ENCODE measurements at regions of chr2 and their contacts with region 1.

Region 1: DNA sequence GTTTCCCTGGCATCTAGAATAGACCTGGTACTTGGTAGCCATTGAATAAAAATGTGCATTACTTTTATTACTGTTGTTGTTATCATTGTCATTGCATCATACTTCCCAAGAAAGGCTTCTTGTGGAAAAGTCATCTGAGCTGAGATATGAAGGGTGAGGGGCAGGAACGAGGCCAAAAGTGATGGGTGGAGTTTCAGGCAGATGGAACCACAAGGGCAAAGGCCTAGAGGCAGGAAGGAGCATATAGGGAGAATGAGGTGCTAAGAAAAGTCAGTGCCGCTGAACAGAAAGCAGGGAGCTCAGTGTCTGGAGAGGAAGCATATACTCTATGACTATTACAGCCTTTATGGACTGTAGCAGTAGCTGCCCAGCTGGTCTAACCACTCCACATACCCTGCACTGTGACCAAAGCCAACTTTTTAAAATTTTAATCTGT is 219.3 kb downstream of the SPP2 start:
- DNase-seq: no peak
- H3K4me3 ChIP-seq: no peak overlapping the region
- H3K4me3 Mint-ChIP-seq: no peak overlapping the region
- H3K27ac ChIP-seq: no peak overlapping the region
- H3K27ac Mint-ChIP-seq: peak overlapping the region in 3 of 7 donors; percentile 0 to 69 (median 48)
- H3K4me1 ChIP-seq: peaks cover 40% of the 10 kb centered on the region
- H3K4me1 Mint-ChIP-seq: peaks cover 34 to 62% (median 39%) of the 10 kb centered on the region in 4 donors
- H3K27me3 ChIP-seq: no peaks in the 10 kb centered on the region
- H3K27me3 Mint-ChIP-seq: no peaks in the 10 kb centered on the region

Region 2: DNA sequence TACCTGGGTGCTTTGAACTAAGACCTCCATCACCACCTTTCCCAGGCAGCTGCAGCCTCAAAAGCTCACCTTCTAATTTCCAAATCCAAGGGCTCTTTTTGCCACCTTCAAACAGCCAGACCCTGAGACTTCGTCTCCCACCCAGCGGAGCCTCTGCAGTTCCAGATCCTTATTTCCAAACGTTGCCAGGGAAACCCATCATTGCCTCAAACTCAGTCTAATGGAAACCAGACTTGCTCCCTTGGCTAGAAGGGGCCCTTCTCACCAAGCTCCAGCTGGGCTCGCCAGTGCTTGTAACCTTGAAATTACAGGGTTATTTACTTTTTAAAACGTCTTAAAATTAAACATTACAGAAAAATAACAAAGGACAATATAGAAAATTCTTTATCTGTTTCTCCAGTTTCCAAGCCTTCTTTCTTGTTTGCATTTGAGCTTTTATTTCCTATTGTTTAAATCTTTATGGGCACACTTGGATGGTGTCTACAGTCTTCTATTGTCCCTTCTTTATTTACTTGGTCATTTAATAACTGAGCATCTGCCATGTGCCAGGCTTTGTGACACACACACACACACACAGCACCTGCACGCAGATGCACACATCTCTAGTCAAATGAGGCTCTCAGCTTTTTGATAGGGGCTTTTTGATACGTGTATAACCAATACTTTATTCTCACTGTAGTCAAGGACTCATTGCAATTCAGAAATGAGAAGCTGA is 316.5 kb before region 1 on chr2:
- CTCF ChIA-PET with region 1: no interaction called
- POLR2A ChIA-PET with region 1: no interaction called
- intact Hi-C with region 1: no loop called
- DNase-seq: no peak
- H3K4me3 ChIP-seq: no peak overlapping the region
- H3K4me3 Mint-ChIP-seq: no peak overlapping the region
- H3K27ac ChIP-seq: no peak overlapping the region
- H3K27ac Mint-ChIP-seq: no peak overlapping the region
- H3K4me1 ChIP-seq: no peaks in the 10 kb centered on the region
- H3K4me1 Mint-ChIP-seq: no peaks in the 10 kb centered on the region
- H3K27me3 ChIP-seq: peaks cover 3% of the 10 kb centered on the region
- H3K27me3 Mint-ChIP-seq: peaks cover 15 to 31% of the 10 kb centered on the region in 2 donors

Region 3: GRCh38 chr2:234218266-234219180 is 51.3 kb before region 1 on chr2:
- CTCF ChIA-PET with region 1: no interaction called
- POLR2A ChIA-PET with region 1: no interaction called
- intact Hi-C with region 1: loop called (anchors 10 kb)
- DNase-seq: peak in 3 of 5 donors; percentile 7 to 11 (median 10)
- H3K4me3 ChIP-seq: no peak overlapping the region
- H3K4me3 Mint-ChIP-seq: peak overlapping the region; percentile 5 to 84 (median 69)
- H3K27ac ChIP-seq: no peak overlapping the region
- H3K27ac Mint-ChIP-seq: peak overlapping the region in 5 of 7 donors; percentile 29 to 90 (median 78)
- H3K4me1 ChIP-seq: peaks cover 49% of the 10 kb centered on the region
- H3K4me1 Mint-ChIP-seq: peaks cover 34 to 65% (median 47%) of the 10 kb centered on the region in 4 donors
- H3K27me3 ChIP-seq: no peaks in the 10 kb centered on the region
- H3K27me3 Mint-ChIP-seq: no peaks in the 10 kb centered on the region